Activated CD4-positive, alpha-beta T cell treated with anti-CD3 and anti-CD28 coated beads, Interleukin-2, amount 10 ng/mL, durations not matched to agents 24 days and 14 days (primary cell): ENCODE measurements at regions of chr13 and their contacts with region 1.

Region 1: GRCh38 chr13:31044377-31045285 is 112.2 kb downstream of the TEX26 start:
- DNase-seq: peak; percentile 96
- H3K4me3 Mint-ChIP-seq: peak overlapping the region; percentile 74
- H3K27ac Mint-ChIP-seq: peak overlapping the region; percentile 91
- H3K4me1 Mint-ChIP-seq: peaks cover 48% of the 10 kb centered on the region
- H3K27me3 Mint-ChIP-seq: peaks cover 4% of the 10 kb centered on the region

Region 2: GRCh38 chr13:29758531-29759114 is 1286.0 kb before region 1 on chr13:
- intact Hi-C with region 1: loop called (anchors 10 kb)
- DNase-seq: peak; percentile 79
- H3K4me3 Mint-ChIP-seq: peak overlapping the region; percentile 19
- H3K27ac Mint-ChIP-seq: peak overlapping the region; percentile 70
- H3K4me1 Mint-ChIP-seq: peaks cover 16% of the 10 kb centered on the region
- H3K27me3 Mint-ChIP-seq: no peaks in the 10 kb centered on the region

Region 3: DNA sequence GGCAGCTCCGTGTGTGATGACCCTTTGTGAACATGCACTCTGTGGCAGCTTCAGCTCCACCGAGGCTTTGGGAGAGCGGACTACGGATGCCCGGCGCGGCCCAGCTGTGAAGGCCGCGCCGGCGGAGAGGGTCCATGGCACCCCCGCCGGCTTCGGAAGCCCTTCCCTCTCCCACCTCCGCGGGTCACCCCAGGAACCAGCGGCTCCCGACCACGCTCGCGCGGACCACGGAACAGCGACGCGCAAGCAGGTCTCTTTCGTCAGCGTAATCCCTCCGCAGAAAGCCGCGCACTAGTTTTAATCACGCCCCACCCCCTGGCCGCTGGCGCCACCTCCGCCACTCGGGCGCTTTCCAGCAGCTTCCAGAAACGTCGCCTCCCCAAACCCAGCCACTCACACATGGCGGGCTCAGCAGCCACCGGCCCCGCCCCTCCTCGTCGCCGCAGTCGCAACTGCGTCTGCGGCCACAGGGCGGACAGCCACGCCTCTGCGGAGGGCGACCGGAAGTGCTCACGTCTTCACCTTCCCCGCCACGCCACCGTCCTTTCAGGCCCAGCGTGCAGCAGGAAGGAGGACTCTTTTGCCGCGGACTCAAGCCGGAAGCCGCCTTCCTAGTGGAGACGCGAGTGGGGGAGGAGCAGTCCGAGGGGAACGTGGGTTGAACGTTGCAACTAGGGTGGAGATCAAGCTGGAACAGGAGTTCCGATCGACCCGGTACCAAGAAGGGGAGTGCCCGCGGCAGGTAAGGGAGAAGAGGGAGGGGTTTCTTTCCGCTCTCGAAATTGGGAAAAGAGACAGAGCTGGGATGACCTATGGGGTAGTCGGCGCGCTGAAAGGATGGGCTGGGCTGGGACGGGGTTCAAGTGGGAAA is 427.1 kb before region 1 on chr13 and contains the start of gene USPL1:
- intact Hi-C with region 1: loop called (anchors 2 kb)
- DNase-seq: peak; percentile 100
- H3K4me3 Mint-ChIP-seq: no peak within 1 kb of the TSS
- H3K27ac Mint-ChIP-seq: no peak within 1 kb of the TSS
- H3K4me1 Mint-ChIP-seq: peaks cover 30% of the 10 kb centered on the region
- H3K27me3 Mint-ChIP-seq: no peaks in the 10 kb centered on the region
- total RNA-seq, gene USPL1: 16.2 and 18.7 TPM in 2 replicates

Region 4: DNA sequence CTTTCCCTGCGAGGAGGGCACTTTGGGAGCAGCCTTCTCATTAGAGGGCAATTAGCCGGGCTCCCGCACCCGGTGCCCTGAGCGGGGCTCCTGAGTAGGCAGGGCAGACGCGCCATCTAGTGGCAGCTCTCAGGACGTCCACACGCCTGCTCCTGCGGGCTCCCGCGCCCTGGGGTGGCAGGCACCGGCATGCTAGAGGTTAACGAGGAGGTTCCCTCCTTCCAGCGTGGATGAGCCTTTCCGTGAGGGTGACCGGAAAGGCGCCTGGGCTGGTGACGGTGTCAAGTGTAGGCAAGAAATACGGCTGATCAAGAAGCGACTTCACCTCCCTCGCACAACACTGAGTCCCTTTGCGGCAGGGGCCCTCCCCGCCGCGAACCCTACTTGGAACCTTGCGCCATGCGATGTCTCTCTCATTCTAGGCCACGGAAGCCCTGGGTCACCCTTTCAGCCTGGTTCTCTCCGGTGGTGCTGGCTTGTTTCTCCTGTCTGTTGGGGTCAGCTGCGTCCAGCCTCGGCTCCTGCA is 241.6 kb before region 1 on chr13:
- intact Hi-C with region 1: loop called (anchors 5 kb)
- DNase-seq: peak; percentile 94
- H3K4me3 Mint-ChIP-seq: peak overlapping the region; percentile 65
- H3K27ac Mint-ChIP-seq: no peak overlapping the region
- H3K4me1 Mint-ChIP-seq: peaks cover 18% of the 10 kb centered on the region
- H3K27me3 Mint-ChIP-seq: no peaks in the 10 kb centered on the region

Region 5: GRCh38 chr13:30880856-30881155 is 163.8 kb before region 1 on chr13:
- intact Hi-C with region 1: loop called (anchors 5 kb)
- DNase-seq: no peak
- H3K4me3 Mint-ChIP-seq: no peak overlapping the region
- H3K27ac Mint-ChIP-seq: no peak overlapping the region
- H3K4me1 Mint-ChIP-seq: peaks cover 12% of the 10 kb centered on the region
- H3K27me3 Mint-ChIP-seq: peaks cover 21% of the 10 kb centered on the region

Region 6: DNA sequence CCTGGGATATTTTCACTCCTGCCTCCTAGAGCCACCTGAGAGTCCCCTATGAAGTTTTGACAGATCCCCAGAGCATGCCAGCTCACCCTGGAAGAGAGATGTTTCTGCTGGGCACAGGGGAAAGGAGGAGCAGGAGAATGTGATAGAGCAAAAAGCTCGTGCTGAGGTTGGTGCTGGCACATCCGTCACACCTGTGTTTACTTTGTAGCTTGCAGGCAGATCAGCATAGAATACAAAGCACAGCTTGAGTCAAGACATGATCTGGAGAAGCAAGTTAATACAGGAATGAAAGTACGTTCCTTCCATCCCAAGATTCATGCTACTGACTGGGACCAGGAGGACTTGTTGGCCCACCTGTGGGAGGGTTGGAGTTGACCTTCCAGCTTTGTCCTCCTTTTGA is 71.0 kb after region 1 on chr13:
- intact Hi-C with region 1: no loop called
- DNase-seq: no peak
- H3K4me3 Mint-ChIP-seq: no peak overlapping the region
- H3K27ac Mint-ChIP-seq: no peak overlapping the region
- H3K4me1 Mint-ChIP-seq: peaks cover 7% of the 10 kb centered on the region
- H3K27me3 Mint-ChIP-seq: peaks cover 58% of the 10 kb centered on the region

Region 7: DNA sequence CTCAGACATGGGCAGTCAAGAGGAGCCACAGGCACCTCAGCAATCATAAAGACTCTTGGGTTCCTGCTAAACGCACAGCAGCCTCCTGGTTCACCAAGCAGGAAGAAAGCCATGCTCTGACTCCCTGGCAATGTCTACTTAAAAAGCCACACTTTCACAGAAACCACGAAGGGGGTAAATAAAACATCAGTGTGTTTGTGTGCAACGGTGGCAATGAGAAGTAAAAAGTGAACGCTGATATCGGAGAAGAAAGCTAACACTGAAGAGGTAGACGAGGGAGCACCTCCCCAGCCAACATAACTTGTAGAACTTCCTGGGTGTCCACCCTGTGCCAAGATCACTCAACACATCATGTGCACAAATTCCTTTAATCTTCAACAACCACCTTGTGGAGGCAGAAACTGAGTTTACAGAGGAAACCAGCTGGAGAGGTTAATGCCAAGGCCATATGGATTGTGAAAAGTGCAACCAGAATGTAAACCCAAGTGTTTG is 86.9 kb after region 1 on chr13:
- intact Hi-C with region 1: loop called (anchors 1 kb)
- DNase-seq: peak; percentile 65
- H3K4me3 Mint-ChIP-seq: no peak overlapping the region
- H3K27ac Mint-ChIP-seq: peak overlapping the region; percentile 70
- H3K4me1 Mint-ChIP-seq: peaks cover 38% of the 10 kb centered on the region
- H3K27me3 Mint-ChIP-seq: peaks cover 15% of the 10 kb centered on the region

Region 8: DNA sequence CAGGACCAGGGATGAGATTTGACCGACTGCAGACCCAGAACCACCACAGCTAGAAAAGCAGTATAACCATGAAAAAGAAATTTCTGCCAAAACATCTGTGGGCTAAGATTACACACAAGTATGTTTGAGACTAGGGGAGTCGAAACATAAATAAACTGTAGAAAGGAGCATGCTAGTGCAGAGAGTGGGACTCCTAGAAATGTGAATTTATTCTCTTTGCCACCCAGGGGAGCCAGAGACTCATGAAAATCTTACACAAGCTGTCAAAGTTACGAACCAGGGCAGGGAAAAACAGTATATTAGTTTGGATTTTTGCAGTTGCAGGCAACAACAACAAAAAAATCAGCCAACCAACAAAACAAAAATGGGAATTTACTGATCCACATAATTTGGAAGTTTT is 129.4 kb after region 1 on chr13:
- intact Hi-C with region 1: no loop called
- DNase-seq: no peak
- H3K4me3 Mint-ChIP-seq: no peak overlapping the region
- H3K27ac Mint-ChIP-seq: no peak overlapping the region
- H3K4me1 Mint-ChIP-seq: peaks cover 13% of the 10 kb centered on the region
- H3K27me3 Mint-ChIP-seq: peaks cover 10% of the 10 kb centered on the region